ENCODE measurements at regions of chr4 and their contacts with region 1.

Region 1: DNA sequence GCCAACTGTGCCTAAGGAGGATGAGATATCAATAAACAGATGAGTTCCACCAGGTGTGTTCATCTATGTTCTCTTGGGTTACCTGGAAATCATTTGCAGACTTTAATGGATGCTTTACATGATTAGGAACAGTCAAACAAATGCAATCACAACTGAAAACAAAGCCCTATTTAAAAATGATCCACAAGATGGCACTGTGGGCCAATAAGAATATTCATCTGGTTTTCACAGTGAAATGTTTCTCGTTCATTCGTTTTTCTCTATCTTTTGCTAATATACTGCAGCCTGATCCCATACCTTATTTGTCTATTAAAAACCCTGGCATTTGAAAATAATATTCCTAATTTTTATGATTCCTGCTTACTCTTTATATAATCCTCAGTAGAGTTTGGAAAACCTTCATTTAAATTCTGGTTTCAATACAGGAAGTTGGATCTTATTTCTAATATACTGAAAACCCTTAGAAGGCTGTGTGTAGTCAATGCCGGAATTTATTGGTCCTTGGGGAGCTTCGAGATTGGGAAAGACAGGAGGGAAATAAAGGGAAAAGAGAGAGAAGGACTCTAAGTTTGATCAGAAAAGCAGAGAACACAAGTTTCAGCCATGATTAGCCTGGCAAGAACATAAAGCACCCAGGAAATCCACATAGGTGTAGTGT is 63.8 kb upstream of the TAPT1 start:
- DNase-seq: no peak
- ATAC-seq: no peak
- H3K4me3 ChIP-seq: no peak overlapping the region
- H3K27ac ChIP-seq: no peak overlapping the region
- H3K4me1 ChIP-seq: no peaks in the 10 kb centered on the region
- H3K27me3 ChIP-seq: no peaks in the 10 kb centered on the region

Region 2: DNA sequence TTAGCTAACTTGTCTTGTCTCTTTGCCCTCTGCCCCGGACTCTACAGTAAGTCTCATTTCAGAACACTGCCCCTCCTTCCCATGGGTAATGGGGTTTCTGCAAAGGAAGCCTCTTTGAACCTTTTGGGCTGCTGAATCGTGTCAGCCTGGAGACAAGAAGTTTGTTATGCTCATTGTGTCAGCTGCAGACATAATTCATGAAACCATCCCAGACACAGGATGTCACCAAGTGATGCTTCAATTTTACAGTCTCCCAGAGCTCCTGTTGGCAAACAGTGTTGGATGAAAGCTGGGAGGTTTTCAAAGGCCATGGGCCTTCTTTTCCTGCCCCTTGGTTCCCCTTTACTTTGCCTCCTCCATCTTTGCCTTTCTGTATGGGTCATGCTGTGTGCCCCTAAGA is 159.4 kb after region 1 on chr4:
- intact Hi-C with region 1: loop called in 1 of 2 experiments (anchors 5 kb)
- DNase-seq: no peak
- ATAC-seq: no peak
- H3K4me3 ChIP-seq: no peak overlapping the region
- H3K27ac ChIP-seq: no peak overlapping the region
- H3K4me1 ChIP-seq: no peaks in the 10 kb centered on the region
- H3K27me3 ChIP-seq: no peaks in the 10 kb centered on the region

Region 3: GRCh38 chr4:17468371-17469221 is 1178.6 kb after region 1 on chr4:
- intact Hi-C with region 1: loop called in 1 of 2 experiments (anchors 10 kb)
- DNase-seq: no peak
- ATAC-seq: no peak
- H3K4me3 ChIP-seq: no peak overlapping the region
- H3K27ac ChIP-seq: no peak overlapping the region
- H3K4me1 ChIP-seq: no peaks in the 10 kb centered on the region
- H3K27me3 ChIP-seq: no peaks in the 10 kb centered on the region